ENCODE measurements at regions of chr16 and their contacts with region 1.

Region 1: GRCh38 chr16:19745286-19746010 is 27.4 kb downstream of the IQCK start:
- DNase-seq: no peak
- ATAC-seq: no peak
- H3K4me3 ChIP-seq: no peak overlapping the region
- H3K4me3 Mint-ChIP-seq: no peak overlapping the region
- H3K27ac ChIP-seq: no peak overlapping the region
- H3K27ac Mint-ChIP-seq: no peak overlapping the region
- H3K4me1 ChIP-seq: no peaks in the 10 kb centered on the region
- H3K4me1 Mint-ChIP-seq: no peaks in the 10 kb centered on the region
- H3K27me3 ChIP-seq: no peaks in the 10 kb centered on the region
- H3K27me3 Mint-ChIP-seq: no peaks in the 10 kb centered on the region
- CTCF ChIP-seq: no peak

Region 2: GRCh38 chr16:19696328-19696727 is 49.1 kb before region 1 on chr16:
- CTCF ChIA-PET with region 1: no interaction called
- POLR2A ChIA-PET with region 1: no interaction called
- intact Hi-C with region 1: loop called in 1 of 2 experiments (anchors 10 kb)
- DNase-seq: peak in 8 of 9 experiments; percentile 46 to 73 (median 52)
- ATAC-seq: peak; percentile 23
- H3K4me3 ChIP-seq: peak overlapping the region in 1 of 2 experiments; percentile 9
- H3K4me3 Mint-ChIP-seq: peak overlapping the region; percentile 64
- H3K27ac ChIP-seq: peak overlapping the region; percentile 17 to 41
- H3K27ac Mint-ChIP-seq: peak overlapping the region; percentile 88
- H3K4me1 ChIP-seq: peaks cover 34% of the 10 kb centered on the region
- H3K4me1 Mint-ChIP-seq: peaks cover 43% of the 10 kb centered on the region
- H3K27me3 ChIP-seq: no peaks in the 10 kb centered on the region
- H3K27me3 Mint-ChIP-seq: no peaks in the 10 kb centered on the region
- CTCF ChIP-seq: no peak

Region 3: DNA sequence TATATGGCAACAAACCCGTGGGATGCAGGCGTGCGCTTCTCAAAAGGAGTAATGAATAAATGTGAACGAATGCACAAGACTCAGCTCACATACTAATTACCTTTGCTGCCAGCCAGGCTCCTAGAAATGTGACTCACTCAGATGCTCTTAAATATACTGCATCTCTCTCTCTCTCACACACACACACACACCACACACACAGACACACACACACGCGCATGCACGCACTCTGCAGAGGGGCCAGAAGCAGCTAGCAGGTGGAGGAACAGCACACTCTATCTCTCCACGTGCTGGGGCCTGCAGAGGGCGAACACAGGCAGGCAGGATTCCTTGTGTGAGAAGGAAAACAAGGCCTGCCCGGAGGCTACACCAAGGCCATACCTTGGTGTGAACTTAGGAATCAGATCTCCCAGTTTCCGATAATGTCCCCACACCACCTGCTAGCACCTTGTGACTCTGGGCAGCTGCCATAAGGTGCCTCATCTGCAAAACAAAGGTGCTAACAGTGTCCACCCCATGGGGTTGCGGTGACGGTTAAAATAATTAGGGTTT is 133.9 kb after region 1 on chr16:
- CTCF ChIA-PET with region 1: no interaction called
- POLR2A ChIA-PET with region 1: no interaction called
- intact Hi-C with region 1: loop called in 1 of 2 experiments (anchors 10 kb)
- DNase-seq: no peak
- ATAC-seq: no peak
- H3K4me3 ChIP-seq: no peak overlapping the region
- H3K4me3 Mint-ChIP-seq: no peak overlapping the region
- H3K27ac ChIP-seq: no peak overlapping the region
- H3K27ac Mint-ChIP-seq: no peak overlapping the region
- H3K4me1 ChIP-seq: peaks cover 18% of the 10 kb centered on the region
- H3K4me1 Mint-ChIP-seq: peaks cover 6% of the 10 kb centered on the region
- H3K27me3 ChIP-seq: peaks cover 17 to 18% of the 10 kb centered on the region in 2 experiments
- H3K27me3 Mint-ChIP-seq: peaks cover 31% of the 10 kb centered on the region
- CTCF ChIP-seq: no peak

Measured in CD8-positive, alpha-beta T cell (primary cell).